CD4-positive, alpha-beta T cell (primary cell): ENCODE measurements at regions of chr14 and their contacts with region 1.

Region 1: GRCh38 chr14:73491256-73492042 is 716 bp downstream of the RIOX1 start:
- DNase-seq: peak; percentile 31 to 90 (median 64)
- ATAC-seq: peak; percentile 72
- H3K4me3 ChIP-seq: peak overlapping the region; percentile 77
- H3K4me3 Mint-ChIP-seq: peak overlapping the region; percentile 95
- H3K27ac ChIP-seq: peak overlapping the region; percentile 52 to 83
- H3K27ac Mint-ChIP-seq: peak overlapping the region; percentile 94
- H3K4me1 ChIP-seq: peaks cover 43% of the 10 kb centered on the region
- H3K4me1 Mint-ChIP-seq: peaks cover 59% of the 10 kb centered on the region
- H3K27me3 ChIP-seq: no peaks in the 10 kb centered on the region
- H3K27me3 Mint-ChIP-seq: no peaks in the 10 kb centered on the region
- CTCF ChIP-seq: no peak

Region 2: GRCh38 chr14:73058224-73058921 is 433.1 kb before region 1 on chr14 and contains the start of gene RBM25:
- CTCF ChIA-PET with region 1: no interaction called
- POLR2A ChIA-PET with region 1: interaction called, 23 read pairs
- intact Hi-C with region 1: no loop called
- DNase-seq: peak; percentile 89 to 98 (median 92)
- ATAC-seq: peak; percentile 93
- H3K4me3 ChIP-seq: peak within 1 kb of the TSS; percentile 91
- H3K4me3 Mint-ChIP-seq: no peak within 1 kb of the TSS
- H3K27ac ChIP-seq: peak within 1 kb of the TSS; percentile 78 to 93
- H3K27ac Mint-ChIP-seq: no peak within 1 kb of the TSS
- H3K4me1 ChIP-seq: peaks cover 38% of the 10 kb centered on the region
- H3K4me1 Mint-ChIP-seq: peaks cover 36% of the 10 kb centered on the region
- H3K27me3 ChIP-seq: peaks cover 0 to 2% of the 10 kb centered on the region in 2 experiments
- H3K27me3 Mint-ChIP-seq: no peaks in the 10 kb centered on the region
- CTCF ChIP-seq: no peak
- total RNA-seq, gene RBM25: 157 to 161 TPM

Region 3: GRCh38 chr14:73458151-73458976 is 33.1 kb before region 1 on chr14 and contains the start of gene NUMB:
- CTCF ChIA-PET with region 1: interaction called, 3 read pairs
- POLR2A ChIA-PET with region 1: interaction called, 51 read pairs
- intact Hi-C with region 1: loop called in 1 of 2 experiments (anchors 2 kb)
- DNase-seq: peak; percentile 88 to 100 (median 94)
- ATAC-seq: peak; percentile 96
- H3K4me3 ChIP-seq: peak within 1 kb of the TSS; percentile 98
- H3K4me3 Mint-ChIP-seq: peak within 1 kb of the TSS; percentile 97
- H3K27ac ChIP-seq: peak within 1 kb of the TSS; percentile 23 to 37
- H3K27ac Mint-ChIP-seq: peak within 1 kb of the TSS; percentile 84
- H3K4me1 ChIP-seq: peaks cover 21% of the 10 kb centered on the region
- H3K4me1 Mint-ChIP-seq: peaks cover 45% of the 10 kb centered on the region
- H3K27me3 ChIP-seq: no peaks in the 10 kb centered on the region
- H3K27me3 Mint-ChIP-seq: no peaks in the 10 kb centered on the region
- CTCF ChIP-seq: no peak
- total RNA-seq, gene NUMB: 27.9 to 31.5 TPM

Region 4: DNA sequence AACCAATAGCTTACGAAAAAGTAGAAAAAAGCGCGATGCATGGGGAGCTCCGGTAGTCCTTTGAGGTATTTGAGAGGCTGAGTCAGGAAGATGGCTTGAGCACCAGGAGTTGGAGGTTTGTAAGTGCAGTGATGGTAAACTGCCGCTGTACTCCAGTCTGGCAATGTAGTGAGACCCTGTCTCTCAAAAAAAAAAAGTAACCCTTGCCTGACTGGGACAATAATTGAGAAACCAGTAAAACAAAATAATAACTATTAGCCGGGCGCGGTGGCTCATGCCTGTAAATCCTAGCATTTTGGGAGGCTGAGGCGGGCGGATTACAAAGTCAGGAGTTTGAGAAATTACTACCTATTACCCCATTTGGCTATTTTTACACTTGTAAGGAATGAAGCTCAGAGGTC is 76.9 kb after region 1 on chr14:
- CTCF ChIA-PET with region 1: interaction called, 12 read pairs
- POLR2A ChIA-PET with region 1: interaction called, 88 read pairs
- intact Hi-C with region 1: no loop called
- DNase-seq: peak in 4 of 14 experiments; percentile 16 to 54 (median 42)
- ATAC-seq: no peak
- H3K4me3 ChIP-seq: peak overlapping the region; percentile 63
- H3K4me3 Mint-ChIP-seq: peak overlapping the region; percentile 97
- H3K27ac ChIP-seq: peak overlapping the region; percentile 59 to 74
- H3K27ac Mint-ChIP-seq: peak overlapping the region; percentile 98
- H3K4me1 ChIP-seq: peaks cover 51% of the 10 kb centered on the region
- H3K4me1 Mint-ChIP-seq: peaks cover 50% of the 10 kb centered on the region
- H3K27me3 ChIP-seq: no peaks in the 10 kb centered on the region
- H3K27me3 Mint-ChIP-seq: no peaks in the 10 kb centered on the region
- CTCF ChIP-seq: no peak

Region 5: DNA sequence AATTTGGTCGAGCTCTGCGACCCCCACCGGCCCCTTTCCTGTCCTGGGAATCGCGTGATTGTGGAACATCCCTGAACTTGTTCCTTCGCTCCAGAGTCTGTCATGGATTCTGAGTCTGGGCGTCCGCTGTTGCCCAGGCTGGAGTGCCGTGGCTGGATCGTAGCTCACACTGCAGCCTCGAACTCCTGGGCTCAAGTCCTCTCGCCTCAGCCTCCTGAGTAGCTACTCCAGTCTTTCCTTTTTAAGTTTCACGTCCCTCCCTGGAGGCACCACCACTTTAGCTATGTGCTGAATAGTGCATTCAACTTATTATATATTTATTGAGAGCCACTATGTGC is 121.6 kb after region 1 on chr14:
- CTCF ChIA-PET with region 1: no interaction called
- POLR2A ChIA-PET with region 1: interaction called, 34 read pairs
- intact Hi-C with region 1: loop called in 1 of 2 experiments (anchors 5 kb)
- DNase-seq: no peak
- ATAC-seq: no peak
- H3K4me3 ChIP-seq: peak overlapping the region; percentile 56
- H3K4me3 Mint-ChIP-seq: peak overlapping the region; percentile 91
- H3K27ac ChIP-seq: peak overlapping the region in 1 of 2 donors; percentile 16
- H3K27ac Mint-ChIP-seq: peak overlapping the region; percentile 82
- H3K4me1 ChIP-seq: peaks cover 10% of the 10 kb centered on the region
- H3K4me1 Mint-ChIP-seq: peaks cover 7% of the 10 kb centered on the region
- H3K27me3 ChIP-seq: no peaks in the 10 kb centered on the region
- H3K27me3 Mint-ChIP-seq: no peaks in the 10 kb centered on the region
- CTCF ChIP-seq: no peak

Region 6: GRCh38 chr14:73759714-73760597 is 268.5 kb after region 1 on chr14:
- CTCF ChIA-PET with region 1: interaction called, 5 read pairs
- POLR2A ChIA-PET with region 1: interaction called, 13 read pairs
- intact Hi-C with region 1: no loop called
- DNase-seq: peak; percentile 89 to 98 (median 94)
- ATAC-seq: peak; percentile 75
- H3K4me3 ChIP-seq: peak overlapping the region; percentile 63
- H3K4me3 Mint-ChIP-seq: peak overlapping the region; percentile 93
- H3K27ac ChIP-seq: peak overlapping the region; percentile 94 to 97
- H3K27ac Mint-ChIP-seq: peak overlapping the region; percentile 97
- H3K4me1 ChIP-seq: peaks cover 82% of the 10 kb centered on the region
- H3K4me1 Mint-ChIP-seq: peaks cover 86% of the 10 kb centered on the region
- H3K27me3 ChIP-seq: no peaks in the 10 kb centered on the region
- H3K27me3 Mint-ChIP-seq: no peaks in the 10 kb centered on the region
- CTCF ChIP-seq: no peak

Region 7: GRCh38 chr14:73949744-73950734 is 458.6 kb after region 1 on chr14 and contains the starts of genes COQ6 and FAM161B:
- CTCF ChIA-PET with region 1: no interaction called
- POLR2A ChIA-PET with region 1: interaction called, 4 read pairs
- intact Hi-C with region 1: loop called in 1 of 2 experiments (anchors 5 kb)
- DNase-seq: peak; percentile 79 to 98 (median 88)
- ATAC-seq: peak; percentile 92
- H3K4me3 ChIP-seq: peak within 1 kb of the TSS; percentile 96
- H3K4me3 Mint-ChIP-seq: peak within 1 kb of the TSS; percentile 99
- H3K27ac ChIP-seq: peak within 1 kb of the TSS; percentile 94 to 95
- H3K27ac Mint-ChIP-seq: peak within 1 kb of the TSS; percentile 91
- H3K4me1 ChIP-seq: peaks cover 18% of the 10 kb centered on the region
- H3K4me1 Mint-ChIP-seq: peaks cover 32% of the 10 kb centered on the region
- H3K27me3 ChIP-seq: no peaks in the 10 kb centered on the region
- H3K27me3 Mint-ChIP-seq: no peaks in the 10 kb centered on the region
- CTCF ChIP-seq: peak; percentile 27
- total RNA-seq, gene COQ6: 37.1 to 38.9 TPM
- total RNA-seq, gene FAM161B: 1.5 to 1.7 TPM